K562 (cell line): ENCODE measurements at regions of chr17 and their contacts with region 1.

Region 1: DNA sequence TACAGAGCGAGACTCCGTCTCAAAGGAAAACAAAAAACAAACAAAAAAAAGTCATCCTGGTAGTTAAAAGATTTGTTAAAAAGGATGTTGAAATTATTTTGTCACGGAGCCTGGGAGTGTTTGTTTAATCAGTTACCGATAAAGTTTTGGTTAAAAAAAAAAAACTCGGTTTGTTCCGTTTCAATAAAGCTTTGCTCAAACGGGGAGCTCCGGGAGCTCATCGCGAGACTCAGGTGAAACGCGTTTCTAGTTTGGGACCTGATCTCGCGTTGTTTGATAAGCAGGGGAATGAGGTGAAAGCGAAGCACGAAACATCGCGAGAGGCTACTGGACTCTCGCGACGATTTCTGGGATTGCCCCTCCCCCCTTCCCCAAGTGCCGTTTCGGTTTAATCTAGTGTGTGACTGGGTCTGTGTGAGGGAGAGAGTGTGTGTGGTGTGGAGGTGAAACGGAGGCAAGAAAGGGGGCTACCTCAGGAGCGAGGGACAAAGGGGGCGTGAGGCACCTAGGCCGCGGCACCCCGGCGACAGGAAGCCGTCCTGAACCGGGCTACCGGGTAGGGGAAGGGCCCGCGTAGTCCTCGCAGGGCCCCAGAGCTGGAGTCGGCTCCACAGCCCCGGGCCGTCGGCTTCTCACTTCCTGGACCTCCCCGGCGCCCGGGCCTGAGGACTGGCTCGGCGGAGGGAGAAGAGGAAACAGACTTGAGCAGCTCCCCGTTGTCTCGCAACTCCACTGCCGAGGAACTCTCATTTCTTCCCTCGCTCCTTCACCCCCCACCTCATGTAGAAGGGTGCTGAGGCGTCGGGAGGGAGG is at the start of gene CDK12:
- DNase-seq: peak; percentile 96 to 100 (median 96)
- ATAC-seq: peak; percentile 87
- H3K4me3 ChIP-seq: peak within 1 kb of the TSS; percentile 88
- H3K27ac ChIP-seq: peak within 1 kb of the TSS; percentile 100
- H3K4me1 ChIP-seq: peaks cover 0 to 5% of the 10 kb centered on the region in 2 experiments; a peak in 1 of 5 replicates
- H3K27me3 ChIP-seq: no peaks in the 10 kb centered on the region
- CTCF ChIP-seq: peak in 1 of 3 experiments; percentile 50; a peak in 2 of 6 replicates
- EP300 ChIP-seq: no peak
- POLR2A ChIP-seq: peak; percentile 99
- RAD21 ChIP-seq: no peak
- polyA plus RNA-seq, gene CDK12: 3.4 to 3.7 TPM

Region 2: GRCh38 chr17:39450847-39451581 is 10.3 kb before region 1 on chr17 and contains the start of gene MED1:
- CTCF ChIA-PET with region 1: no interaction called
- POLR2A ChIA-PET with region 1: interaction called, 65 read pairs
- in situ Hi-C with region 1: no loop called
- intact Hi-C with region 1: no loop called
- DNase-seq: peak; percentile 86 to 99 (median 92)
- ATAC-seq: peak; percentile 95
- H3K4me3 ChIP-seq: peak within 1 kb of the TSS; percentile 81
- H3K27ac ChIP-seq: peak within 1 kb of the TSS; percentile 92
- H3K4me1 ChIP-seq: peaks cover 2 to 17% of the 10 kb centered on the region in 2 experiments; a peak in 4 of 5 replicates
- H3K27me3 ChIP-seq: no peaks in the 10 kb centered on the region
- CTCF ChIP-seq: no peak
- EP300 ChIP-seq: no peak
- POLR2A ChIP-seq: peak; percentile 96
- RAD21 ChIP-seq: no peak
- polyA plus RNA-seq, gene MED1: 14.0 to 14.1 TPM

Region 3: GRCh38 chr17:39473310-39473709 is 12.0 kb after region 1 on chr17:
- CTCF ChIA-PET with region 1: no interaction called
- POLR2A ChIA-PET with region 1: interaction called, 72 read pairs
- in situ Hi-C with region 1: no loop called
- intact Hi-C with region 1: no loop called
- DNase-seq: no peak
- ATAC-seq: no peak
- H3K4me3 ChIP-seq: no peak overlapping the region
- H3K27ac ChIP-seq: no peak overlapping the region
- H3K4me1 ChIP-seq: no peaks in the 10 kb centered on the region
- H3K27me3 ChIP-seq: no peaks in the 10 kb centered on the region
- CTCF ChIP-seq: no peak
- EP300 ChIP-seq: no peak
- POLR2A ChIP-seq: no peak
- RAD21 ChIP-seq: no peak

Region 4: DNA sequence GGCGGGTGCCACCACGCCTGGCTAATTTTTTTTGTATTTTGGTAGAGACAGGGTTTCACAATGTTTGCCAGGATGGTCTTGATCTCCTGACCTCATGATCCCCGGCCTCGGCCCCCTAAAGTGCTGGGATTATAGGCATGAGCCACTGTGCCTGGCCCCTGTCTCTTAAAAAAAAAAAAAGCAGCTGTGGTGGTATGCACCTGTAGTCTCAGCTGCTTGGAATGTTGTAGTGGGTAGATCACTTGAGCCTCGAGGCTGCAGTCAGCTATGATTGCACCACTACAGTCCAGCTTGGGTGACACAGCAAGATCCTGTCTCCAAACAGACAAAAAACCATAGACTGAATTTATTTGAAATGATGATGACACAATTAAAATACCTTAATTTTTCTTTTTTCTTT is 24.2 kb after region 1 on chr17:
- CTCF ChIA-PET with region 1: no interaction called
- POLR2A ChIA-PET with region 1: interaction called, 26 read pairs
- in situ Hi-C with region 1: no loop called
- intact Hi-C with region 1: no loop called
- DNase-seq: no peak
- ATAC-seq: peak; percentile 67; the same call in 2 of the 3 replicates
- H3K4me3 ChIP-seq: no peak overlapping the region
- H3K27ac ChIP-seq: no peak overlapping the region
- H3K4me1 ChIP-seq: peaks cover 0 to 3% of the 10 kb centered on the region in 2 experiments; a peak in 2 of 5 replicates
- H3K27me3 ChIP-seq: no peaks in the 10 kb centered on the region
- CTCF ChIP-seq: no peak
- EP300 ChIP-seq: no peak
- POLR2A ChIP-seq: no peak
- RAD21 ChIP-seq: no peak